Endothelial cell of umbilical vein (primary cell): ENCODE measurements at regions of chr2 and their contacts with region 1.

Region 1: DNA sequence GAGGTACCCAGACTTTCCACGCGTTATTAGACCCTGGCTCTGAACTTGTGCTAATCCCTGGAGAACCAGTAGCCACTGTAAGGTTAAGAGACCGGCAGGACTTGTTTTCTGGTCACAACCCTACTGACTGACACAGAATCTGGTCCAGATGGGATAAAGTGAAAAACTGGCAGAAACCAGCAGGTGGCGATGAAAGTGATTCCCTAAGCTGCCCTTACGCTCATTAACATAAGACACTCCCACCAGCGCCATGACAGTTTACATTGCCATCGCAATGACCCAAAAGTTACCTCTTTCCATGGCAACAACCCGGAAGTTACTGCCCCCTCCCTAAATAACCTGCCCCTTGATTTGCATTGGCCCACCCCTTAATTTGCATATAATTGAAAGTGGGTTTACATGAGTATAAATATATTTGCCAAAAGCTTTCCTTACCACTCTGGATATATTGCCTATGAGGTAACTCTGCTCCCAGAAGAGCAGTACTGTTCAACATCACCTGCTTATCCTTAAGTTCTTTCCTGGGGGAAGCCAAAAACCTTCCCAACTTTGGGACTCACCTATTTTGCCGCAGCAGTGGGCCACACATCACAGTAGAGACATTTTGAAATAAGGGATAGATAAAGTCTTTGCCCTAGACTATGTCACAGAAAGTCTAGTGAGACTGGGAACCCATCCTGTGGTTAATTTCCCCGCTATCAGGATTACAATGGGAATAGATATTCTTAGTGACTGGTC is 35.8 kb upstream of the AFF3 start:
- DNase-seq: peak; percentile 78
- H3K4me3 ChIP-seq: no peak overlapping the region
- H3K27ac ChIP-seq: no peak overlapping the region
- H3K4me1 ChIP-seq: no peaks in the 10 kb centered on the region
- H3K27me3 ChIP-seq: peaks cover 0 to 5% of the 10 kb centered on the region in 2 experiments
- CTCF ChIP-seq: peak; percentile 62 to 68
- POLR2A ChIP-seq: no peak

Region 2: DNA sequence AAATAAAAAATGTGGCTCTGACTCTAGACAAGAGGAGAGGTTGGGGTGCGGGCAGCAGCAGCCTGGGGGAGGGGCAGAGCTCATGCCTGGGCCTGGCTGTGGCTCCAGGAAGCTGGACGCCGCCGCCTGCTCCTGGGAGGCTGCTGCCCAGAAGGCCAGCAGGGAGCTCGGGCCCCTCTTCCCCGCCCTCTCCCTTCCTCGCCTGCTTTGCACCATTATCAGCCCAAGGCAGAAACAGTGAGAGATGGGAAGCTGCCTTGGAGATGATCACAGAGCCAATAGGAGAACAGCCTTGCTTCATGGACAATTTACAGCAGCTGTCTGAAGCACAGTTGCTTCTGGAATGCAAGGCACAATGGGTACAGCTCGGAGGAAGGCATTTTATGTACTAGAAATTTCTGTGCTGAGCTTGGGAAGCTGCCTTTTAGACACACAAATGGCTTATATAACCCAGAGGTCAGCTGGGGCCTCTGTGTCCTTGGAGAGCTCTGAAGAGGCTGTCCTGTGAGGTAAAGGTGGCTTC is 19.5 kb after region 1 on chr2:
- CTCF ChIA-PET with region 1: interaction called, 16 read pairs
- POLR2A ChIA-PET with region 1: no interaction called
- dilution Hi-C with region 1: no loop called
- intact Hi-C with region 1: loop called (anchors 2 kb)
- DNase-seq: peak; percentile 66
- H3K4me3 ChIP-seq: no peak overlapping the region
- H3K27ac ChIP-seq: peak overlapping the region; percentile 60
- H3K4me1 ChIP-seq: peaks cover 51% of the 10 kb centered on the region
- H3K27me3 ChIP-seq: no peaks in the 10 kb centered on the region
- CTCF ChIP-seq: no peak
- POLR2A ChIP-seq: no peak

Region 3: DNA sequence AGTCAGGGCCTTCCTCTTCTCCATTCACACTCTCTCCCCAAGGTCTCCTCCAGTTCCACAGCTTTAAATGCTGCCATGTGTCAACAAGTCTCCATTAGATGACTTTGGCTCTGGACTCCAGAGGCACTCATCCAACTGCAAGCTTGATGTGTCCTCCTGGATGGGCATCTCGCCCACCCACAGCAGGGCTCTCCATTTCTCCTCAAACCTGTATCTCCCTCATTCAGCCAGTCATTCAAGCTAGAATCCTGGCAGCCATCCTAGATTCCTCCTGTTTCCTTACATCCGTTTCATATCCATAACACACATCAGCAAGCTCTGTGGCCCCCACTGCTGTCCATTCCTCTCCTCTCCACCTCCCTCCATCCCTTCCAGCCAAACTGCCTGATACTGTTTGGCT is 52.5 kb after region 1 on chr2:
- CTCF ChIA-PET with region 1: interaction called, 11 read pairs
- POLR2A ChIA-PET with region 1: no interaction called
- dilution Hi-C with region 1: no loop called
- intact Hi-C with region 1: no loop called
- DNase-seq: no peak
- H3K4me3 ChIP-seq: no peak overlapping the region
- H3K27ac ChIP-seq: no peak overlapping the region
- H3K4me1 ChIP-seq: no peaks in the 10 kb centered on the region
- H3K27me3 ChIP-seq: peaks cover 4 to 18% of the 10 kb centered on the region in 2 experiments
- CTCF ChIP-seq: no peak
- POLR2A ChIP-seq: no peak

Region 4: GRCh38 chr2:100242891-100243619 is 64.8 kb after region 1 on chr2:
- CTCF ChIA-PET with region 1: interaction called, 23 read pairs
- POLR2A ChIA-PET with region 1: no interaction called
- dilution Hi-C with region 1: no loop called
- intact Hi-C with region 1: loop called (anchors 1 kb)
- DNase-seq: peak; percentile 47
- H3K4me3 ChIP-seq: no peak overlapping the region
- H3K27ac ChIP-seq: no peak overlapping the region
- H3K4me1 ChIP-seq: no peaks in the 10 kb centered on the region
- H3K27me3 ChIP-seq: no peaks in the 10 kb centered on the region
- CTCF ChIP-seq: peak; percentile 71 to 80
- POLR2A ChIP-seq: no peak